Activated CD4-positive, alpha-beta memory T cell treated with anti-CD3 and anti-CD28 coated beads, Interleukin-2, amount 10 ng/mL, durations not matched to agents 7 days and 5 days (primary cell): ENCODE measurements at regions of chr10 and their contacts with region 1.

Region 1: DNA sequence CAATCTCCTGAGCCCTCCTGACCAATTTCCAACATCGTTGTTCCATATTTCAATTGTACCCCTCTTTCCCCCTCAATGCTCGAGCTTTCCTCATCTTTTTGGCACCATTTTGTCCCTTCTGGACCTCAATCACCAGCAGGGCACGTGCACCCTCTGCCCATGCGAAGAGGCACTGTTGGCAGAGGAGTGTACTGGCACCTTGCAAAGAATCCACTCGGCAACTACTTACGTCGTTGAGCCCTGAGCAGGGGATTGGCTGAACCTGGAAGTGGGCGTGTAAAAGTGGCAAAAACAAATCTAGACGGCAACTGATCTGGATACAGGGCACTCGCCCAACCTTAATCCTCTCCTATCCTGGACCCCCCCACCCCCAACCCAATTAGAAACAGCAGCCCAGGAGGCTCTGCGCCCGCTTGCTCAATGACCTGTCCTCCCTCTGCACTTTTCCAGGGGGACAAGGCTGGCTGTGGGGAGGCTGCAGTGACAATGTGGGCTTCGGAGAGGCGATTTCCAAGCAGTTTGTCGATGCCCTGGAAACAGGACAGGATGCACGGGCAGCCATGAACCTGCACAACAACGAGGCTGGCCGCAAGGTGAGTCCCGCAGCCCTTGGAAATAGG is 18.8 kb downstream of the WNT8B start:
- DNase-seq: peak; percentile 96
- H3K4me3 Mint-ChIP-seq: peak overlapping the region; percentile 70
- H3K27ac Mint-ChIP-seq: no peak overlapping the region
- H3K4me1 Mint-ChIP-seq: peaks cover 22% of the 10 kb centered on the region
- H3K27me3 Mint-ChIP-seq: peaks cover 20% of the 10 kb centered on the region

Region 2: DNA sequence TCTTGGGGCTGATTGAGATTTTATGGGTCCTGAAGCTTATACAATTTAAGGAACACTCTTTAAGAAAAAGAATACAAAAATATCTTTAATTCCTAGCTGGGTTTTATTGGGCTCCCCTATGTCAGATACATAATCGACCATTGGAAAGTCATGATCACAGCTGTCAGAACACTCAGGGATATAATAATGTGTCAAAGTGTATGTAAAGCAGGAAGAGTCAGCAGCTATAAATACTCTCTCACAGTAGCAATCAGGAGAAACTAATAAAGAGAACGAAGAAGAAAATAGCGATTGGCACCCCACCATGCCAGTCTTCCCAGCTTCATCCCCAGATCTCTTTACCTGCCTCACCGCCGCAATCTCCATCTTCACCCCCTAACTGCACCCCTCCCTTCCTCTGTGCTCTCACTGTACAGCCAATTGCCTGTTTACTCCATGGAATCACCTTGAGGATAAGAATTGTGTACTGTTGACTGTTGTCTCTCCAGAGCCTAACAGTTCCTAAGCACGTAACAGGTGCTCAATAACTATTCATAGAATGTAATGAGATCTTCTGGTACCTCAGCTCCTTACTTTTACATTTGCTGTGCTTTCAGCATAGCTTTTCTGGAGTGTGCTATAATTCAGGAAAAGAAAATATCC is 42.8 kb before region 1 on chr10:
- CTCF ChIA-PET with region 1: interaction called, 10 read pairs
- POLR2A ChIA-PET with region 1: interaction called, 3 read pairs
- DNase-seq: no peak
- H3K4me3 Mint-ChIP-seq: no peak overlapping the region
- H3K27ac Mint-ChIP-seq: no peak overlapping the region
- H3K4me1 Mint-ChIP-seq: peaks cover 4% of the 10 kb centered on the region
- H3K27me3 Mint-ChIP-seq: peaks cover 2% of the 10 kb centered on the region

Region 3: DNA sequence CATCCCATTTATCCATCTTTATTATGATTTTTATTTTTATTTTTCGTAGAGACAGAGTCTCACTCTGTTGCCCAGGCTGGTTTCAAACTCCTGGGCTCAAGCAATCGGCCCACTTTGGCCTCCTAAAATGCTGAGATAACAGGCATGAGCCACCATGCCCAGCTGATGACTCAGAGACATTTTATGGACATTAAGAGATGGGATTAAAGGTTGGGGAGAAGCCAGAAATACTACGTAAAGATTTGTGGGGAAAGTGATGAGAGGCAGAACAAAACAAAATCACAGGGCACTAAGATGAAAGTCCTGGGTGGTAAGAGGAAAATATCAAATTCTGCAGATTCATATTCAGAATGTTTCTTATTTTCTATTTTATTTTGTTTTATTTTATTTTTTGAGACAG is 11.2 kb before region 1 on chr10:
- CTCF ChIA-PET with region 1: interaction called, 10 read pairs
- POLR2A ChIA-PET with region 1: interaction called, 9 read pairs
- DNase-seq: no peak
- H3K4me3 Mint-ChIP-seq: no peak overlapping the region
- H3K27ac Mint-ChIP-seq: no peak overlapping the region
- H3K4me1 Mint-ChIP-seq: no peaks in the 10 kb centered on the region
- H3K27me3 Mint-ChIP-seq: peaks cover 6% of the 10 kb centered on the region

Region 4: DNA sequence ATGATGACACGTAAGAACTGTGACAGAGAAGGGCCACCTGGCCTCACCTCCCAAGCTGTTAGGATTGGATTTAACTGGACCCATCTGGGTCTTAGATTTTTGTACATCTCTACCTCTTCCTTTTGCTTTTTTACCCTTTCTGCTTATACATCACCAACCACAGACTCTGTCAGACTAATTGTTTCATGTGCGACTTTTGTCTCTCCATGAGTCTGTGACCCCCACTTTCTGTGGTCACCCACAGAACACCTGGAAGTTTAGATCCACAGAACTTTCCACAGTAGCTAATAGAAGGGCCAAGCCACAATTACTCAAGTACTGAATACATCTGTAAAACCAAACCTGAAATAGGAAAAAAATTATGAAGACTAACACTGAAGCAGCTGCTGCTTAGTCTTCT is 15.0 kb after region 1 on chr10:
- CTCF ChIA-PET with region 1: interaction called, 103 read pairs
- POLR2A ChIA-PET with region 1: interaction called, 94 read pairs
- DNase-seq: no peak
- H3K4me3 Mint-ChIP-seq: no peak overlapping the region
- H3K27ac Mint-ChIP-seq: peak overlapping the region; percentile 17
- H3K4me1 Mint-ChIP-seq: peaks cover 51% of the 10 kb centered on the region
- H3K27me3 Mint-ChIP-seq: no peaks in the 10 kb centered on the region

Region 5: DNA sequence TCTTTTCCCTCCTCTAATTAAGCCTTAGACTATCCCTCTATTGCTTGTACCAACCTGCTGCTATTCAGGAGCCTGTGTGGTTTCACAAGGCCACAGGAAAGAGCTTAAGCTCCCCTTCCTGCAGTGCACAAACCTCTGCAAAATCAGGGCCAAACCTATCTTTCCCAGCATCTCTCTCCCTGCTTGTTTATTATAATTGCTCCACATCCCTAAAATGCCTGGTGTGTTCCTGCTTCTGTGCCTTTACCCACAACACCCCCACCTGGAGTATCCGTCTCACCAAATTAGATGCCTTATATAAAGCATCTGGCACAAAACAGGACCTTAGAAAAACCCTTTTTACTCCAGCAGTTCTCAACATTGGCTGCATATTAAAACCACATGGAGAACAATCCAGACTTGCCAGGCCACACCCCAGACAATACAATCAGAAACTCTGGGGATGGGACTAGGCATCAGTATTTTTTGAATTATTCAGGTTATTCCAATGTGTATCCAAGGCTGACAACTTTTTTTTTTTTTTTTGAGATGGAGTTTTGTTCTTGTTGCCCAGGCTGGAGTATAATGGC is 21.4 kb after region 1 on chr10:
- CTCF ChIA-PET with region 1: interaction called, 114 read pairs
- POLR2A ChIA-PET with region 1: interaction called, 104 read pairs
- DNase-seq: no peak
- H3K4me3 Mint-ChIP-seq: no peak overlapping the region
- H3K27ac Mint-ChIP-seq: peak overlapping the region; percentile 17
- H3K4me1 Mint-ChIP-seq: peaks cover 85% of the 10 kb centered on the region
- H3K27me3 Mint-ChIP-seq: no peaks in the 10 kb centered on the region

Region 6: GRCh38 chr10:100524638-100525037 is 43.1 kb after region 1 on chr10:
- CTCF ChIA-PET with region 1: interaction called, 117 read pairs
- POLR2A ChIA-PET with region 1: interaction called, 35 read pairs
- DNase-seq: no peak
- H3K4me3 Mint-ChIP-seq: no peak overlapping the region
- H3K27ac Mint-ChIP-seq: no peak overlapping the region
- H3K4me1 Mint-ChIP-seq: peaks cover 32% of the 10 kb centered on the region
- H3K27me3 Mint-ChIP-seq: no peaks in the 10 kb centered on the region

Region 7: GRCh38 chr10:100529475-100530298 is 48.1 kb after region 1 on chr10 and contains the start of gene NDUFB8:
- CTCF ChIA-PET with region 1: interaction called, 12 read pairs
- POLR2A ChIA-PET with region 1: interaction called, 16 read pairs
- DNase-seq: peak; percentile 90
- H3K4me3 Mint-ChIP-seq: peak within 1 kb of the TSS; percentile 90
- H3K27ac Mint-ChIP-seq: peak within 1 kb of the TSS; percentile 95
- H3K4me1 Mint-ChIP-seq: peaks cover 41% of the 10 kb centered on the region
- H3K27me3 Mint-ChIP-seq: no peaks in the 10 kb centered on the region
- total RNA-seq, gene NDUFB8: 315 to 324 TPM